ENCODE measurements at regions of chr6 and their contacts with region 1.

Region 1: GRCh38 chr6:127266178-127266891 is at the start of gene RNF146:
- DNase-seq: peak; percentile 76 to 83 (median 77)
- H3K4me3 ChIP-seq: peak within 1 kb of the TSS; percentile 71 to 94
- H3K4me3 Mint-ChIP-seq: peak within 1 kb of the TSS; percentile 97 to 100 (median 100)
- H3K27ac ChIP-seq: peak within 1 kb of the TSS; percentile 94
- H3K27ac Mint-ChIP-seq: peak within 1 kb of the TSS; percentile 89 to 100 (median 99)
- H3K4me1 ChIP-seq: peaks cover 23% of the 10 kb centered on the region
- H3K4me1 Mint-ChIP-seq: peaks cover 25 to 42% (median 35%) of the 10 kb centered on the region in 4 donors
- H3K27me3 ChIP-seq: no peaks in the 10 kb centered on the region
- H3K27me3 Mint-ChIP-seq: peaks cover 0 to 2% of the 10 kb centered on the region in 2 donors
- total RNA-seq, gene RNF146: 36.4 to 39.9 TPM

Region 2: DNA sequence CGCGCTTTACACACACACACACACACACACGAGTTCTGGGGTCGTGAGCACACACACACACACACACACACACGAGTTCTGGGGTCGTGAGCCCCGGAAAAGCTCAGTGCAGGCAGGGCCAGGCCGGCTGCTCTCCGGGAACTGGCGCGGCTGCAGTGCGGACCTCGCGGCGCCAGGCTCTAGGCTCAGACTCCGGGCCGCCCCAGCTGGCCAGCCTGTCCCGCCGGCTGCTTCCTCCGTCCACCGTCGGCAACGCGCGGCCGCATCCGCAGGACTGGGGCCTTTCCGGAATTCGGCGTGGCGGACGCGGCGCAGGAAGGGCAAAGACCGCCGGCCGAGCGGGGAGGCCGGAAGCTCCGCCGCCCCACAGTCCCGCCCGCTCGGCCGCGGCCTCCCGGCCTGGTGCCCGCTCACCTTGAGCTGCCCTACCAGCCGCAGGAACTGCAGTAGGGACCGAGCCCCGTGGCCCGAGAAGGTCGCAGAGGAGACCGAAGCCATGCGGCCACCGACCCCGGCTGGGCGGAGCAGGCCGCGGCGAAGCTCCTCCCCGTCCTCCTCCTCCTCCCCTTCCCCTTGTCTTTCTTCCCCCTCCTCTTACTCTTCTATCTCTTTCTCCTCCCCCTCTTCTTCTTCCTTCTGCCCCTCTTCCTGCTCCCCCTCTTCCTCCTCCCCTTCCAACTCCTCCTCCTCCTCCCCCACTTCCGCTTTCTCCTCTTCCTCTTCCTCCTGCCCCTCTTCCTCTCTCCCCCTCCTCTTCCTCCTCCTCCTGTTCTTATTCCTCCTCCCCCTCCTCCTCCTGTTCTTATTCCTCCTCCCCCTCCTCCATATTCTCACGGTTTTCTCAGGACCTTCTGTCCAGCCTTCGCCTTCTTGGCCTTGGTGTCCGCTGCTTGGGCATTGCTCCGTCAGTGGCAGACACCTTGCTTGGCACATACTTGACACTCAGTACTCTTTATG is 1964.6 kb before region 1 on chr6 and contains the start of gene HDDC2:
- CTCF ChIA-PET with region 1: no interaction called
- POLR2A ChIA-PET with region 1: interaction called, 5 read pairs
- intact Hi-C with region 1: loop called (anchors 5 kb)
- DNase-seq: peak in 4 of 5 donors; percentile 32 to 43 (median 37)
- H3K4me3 ChIP-seq: peak within 1 kb of the TSS; percentile 44 to 62
- H3K4me3 Mint-ChIP-seq: peak within 1 kb of the TSS; percentile 82 to 97 (median 92)
- H3K27ac ChIP-seq: peak within 1 kb of the TSS; percentile 62
- H3K27ac Mint-ChIP-seq: peak within 1 kb of the TSS; percentile 78 to 97 (median 94)
- H3K4me1 ChIP-seq: peaks cover 47% of the 10 kb centered on the region
- H3K4me1 Mint-ChIP-seq: peaks cover 44 to 59% (median 54%) of the 10 kb centered on the region in 4 donors
- H3K27me3 ChIP-seq: no peaks in the 10 kb centered on the region
- H3K27me3 Mint-ChIP-seq: no peaks in the 10 kb centered on the region
- total RNA-seq, gene HDDC2: 49.5 to 53.5 TPM

Region 3: GRCh38 chr6:125986300-125987025 is 1279.9 kb before region 1 on chr6 and contains the start of gene TRMT11:
- CTCF ChIA-PET with region 1: interaction called, 8 read pairs
- POLR2A ChIA-PET with region 1: interaction called, 10 read pairs
- intact Hi-C with region 1: no loop called
- DNase-seq: peak; percentile 80 to 86 (median 81)
- H3K4me3 ChIP-seq: peak within 1 kb of the TSS; percentile 93 to 95
- H3K4me3 Mint-ChIP-seq: peak within 1 kb of the TSS; percentile 6 to 57 (median 24)
- H3K27ac ChIP-seq: peak within 1 kb of the TSS; percentile 77
- H3K27ac Mint-ChIP-seq: no peak within 1 kb of the TSS
- H3K4me1 ChIP-seq: peaks cover 31% of the 10 kb centered on the region
- H3K4me1 Mint-ChIP-seq: peaks cover 2 to 15% (median 8%) of the 10 kb centered on the region in 4 donors
- H3K27me3 ChIP-seq: no peaks in the 10 kb centered on the region
- H3K27me3 Mint-ChIP-seq: no peaks in the 10 kb centered on the region
- total RNA-seq, gene TRMT11: 25.5 to 30.8 TPM

Region 4: DNA sequence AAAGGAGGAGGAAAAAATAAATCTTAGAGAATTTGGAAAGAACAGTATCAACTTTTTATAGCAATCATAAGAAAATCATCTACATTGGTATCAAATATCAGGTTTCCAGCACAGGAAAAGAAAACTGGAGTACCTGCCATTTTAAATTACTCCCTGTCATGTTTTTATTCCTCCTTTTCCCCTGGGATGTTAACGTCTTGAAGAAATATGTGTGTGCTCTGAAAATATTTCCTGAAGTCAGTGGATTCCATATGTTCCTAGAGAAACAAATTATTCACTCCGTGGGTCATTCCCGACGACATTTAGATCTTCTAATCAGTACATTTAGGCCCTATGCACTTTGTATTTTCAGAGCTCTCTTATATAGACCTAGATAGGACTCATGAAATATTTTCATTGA is 189.9 kb before region 1 on chr6:
- CTCF ChIA-PET with region 1: no interaction called
- POLR2A ChIA-PET with region 1: no interaction called
- intact Hi-C with region 1: no loop called
- DNase-seq: no peak
- H3K4me3 ChIP-seq: no peak overlapping the region
- H3K4me3 Mint-ChIP-seq: no peak overlapping the region
- H3K27ac ChIP-seq: no peak overlapping the region
- H3K27ac Mint-ChIP-seq: no peak overlapping the region
- H3K4me1 ChIP-seq: no peaks in the 10 kb centered on the region
- H3K4me1 Mint-ChIP-seq: no peaks in the 10 kb centered on the region
- H3K27me3 ChIP-seq: no peaks in the 10 kb centered on the region
- H3K27me3 Mint-ChIP-seq: peaks cover 1 to 6% of the 10 kb centered on the region in 2 donors

Region 5: GRCh38 chr6:127186889-127187288 is 79.4 kb before region 1 on chr6:
- CTCF ChIA-PET with region 1: interaction called, 4 read pairs
- POLR2A ChIA-PET with region 1: no interaction called
- intact Hi-C with region 1: loop called (anchors 1 kb)
- DNase-seq: peak in 4 of 5 donors; percentile 22 to 26 (median 24)
- H3K4me3 ChIP-seq: no peak overlapping the region
- H3K4me3 Mint-ChIP-seq: no peak overlapping the region
- H3K27ac ChIP-seq: no peak overlapping the region
- H3K27ac Mint-ChIP-seq: no peak overlapping the region
- H3K4me1 ChIP-seq: no peaks in the 10 kb centered on the region
- H3K4me1 Mint-ChIP-seq: no peaks in the 10 kb centered on the region
- H3K27me3 ChIP-seq: no peaks in the 10 kb centered on the region
- H3K27me3 Mint-ChIP-seq: peaks cover 2 to 5% of the 10 kb centered on the region in 2 donors

Region 6: DNA sequence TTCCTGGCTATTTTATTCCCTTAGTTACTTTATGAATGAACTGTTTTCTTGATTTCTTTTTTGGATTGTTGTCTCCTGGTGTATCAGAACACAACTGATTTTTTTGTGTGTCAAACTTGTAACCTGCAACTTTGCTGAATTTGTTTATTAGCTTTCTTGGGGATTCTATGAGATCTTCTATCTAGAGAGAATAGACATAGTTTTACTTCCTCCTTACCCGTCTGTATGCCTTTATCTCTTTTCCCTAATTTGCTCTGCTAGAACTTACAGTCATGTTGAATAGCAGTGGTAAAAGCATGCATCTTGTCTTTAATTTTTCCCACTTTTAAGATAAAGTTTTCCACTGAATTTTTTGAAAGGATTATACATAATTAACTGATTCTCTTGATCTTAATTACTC is 13.5 kb after region 1 on chr6:
- CTCF ChIA-PET with region 1: interaction called, 22 read pairs
- POLR2A ChIA-PET with region 1: interaction called, 10 read pairs
- intact Hi-C with region 1: loop called (anchors 1 kb)
- DNase-seq: no peak
- H3K4me3 ChIP-seq: no peak overlapping the region
- H3K4me3 Mint-ChIP-seq: no peak overlapping the region
- H3K27ac ChIP-seq: no peak overlapping the region
- H3K27ac Mint-ChIP-seq: peak overlapping the region in 3 of 7 donors; percentile 17 to 66 (median 28)
- H3K4me1 ChIP-seq: no peaks in the 10 kb centered on the region
- H3K4me1 Mint-ChIP-seq: peaks cover 5 to 14% (median 7%) of the 10 kb centered on the region in 4 donors
- H3K27me3 ChIP-seq: no peaks in the 10 kb centered on the region
- H3K27me3 Mint-ChIP-seq: no peaks in the 10 kb centered on the region

Region 7: GRCh38 chr6:127302728-127303660 is 36.7 kb after region 1 on chr6:
- CTCF ChIA-PET with region 1: interaction called, 20 read pairs
- POLR2A ChIA-PET with region 1: interaction called, 8 read pairs
- intact Hi-C with region 1: loop called (anchors 5 kb)
- DNase-seq: peak; percentile 31 to 55 (median 51)
- H3K4me3 ChIP-seq: no peak overlapping the region
- H3K4me3 Mint-ChIP-seq: no peak overlapping the region
- H3K27ac ChIP-seq: no peak overlapping the region
- H3K27ac Mint-ChIP-seq: peak overlapping the region in 1 of 7 donors; percentile 6
- H3K4me1 ChIP-seq: no peaks in the 10 kb centered on the region
- H3K4me1 Mint-ChIP-seq: peaks cover 22 to 43% (median 30%) of the 10 kb centered on the region in 4 donors
- H3K27me3 ChIP-seq: no peaks in the 10 kb centered on the region
- H3K27me3 Mint-ChIP-seq: no peaks in the 10 kb centered on the region

Region 8: GRCh38 chr6:127516666-127517273 is 250.4 kb after region 1 on chr6:
- CTCF ChIA-PET with region 1: interaction called, 13 read pairs
- POLR2A ChIA-PET with region 1: interaction called, 16 read pairs
- intact Hi-C with region 1: loop called (anchors 1 kb)
- DNase-seq: peak in 4 of 5 donors; percentile 51 to 60 (median 53)
- H3K4me3 ChIP-seq: peak overlapping the region; percentile 54 to 61
- H3K4me3 Mint-ChIP-seq: peak overlapping the region; percentile 83 to 96 (median 92)
- H3K27ac ChIP-seq: peak overlapping the region; percentile 50
- H3K27ac Mint-ChIP-seq: peak overlapping the region; percentile 43 to 93 (median 88)
- H3K4me1 ChIP-seq: peaks cover 40% of the 10 kb centered on the region
- H3K4me1 Mint-ChIP-seq: peaks cover 26 to 51% (median 38%) of the 10 kb centered on the region in 4 donors
- H3K27me3 ChIP-seq: peaks cover 16% of the 10 kb centered on the region
- H3K27me3 Mint-ChIP-seq: peaks cover 14 to 21% of the 10 kb centered on the region in 2 donors